Breast epithelium (tissue), 4 donors: ENCODE measurements at regions of chr7 and their contacts with region 1.

Region 1: DNA sequence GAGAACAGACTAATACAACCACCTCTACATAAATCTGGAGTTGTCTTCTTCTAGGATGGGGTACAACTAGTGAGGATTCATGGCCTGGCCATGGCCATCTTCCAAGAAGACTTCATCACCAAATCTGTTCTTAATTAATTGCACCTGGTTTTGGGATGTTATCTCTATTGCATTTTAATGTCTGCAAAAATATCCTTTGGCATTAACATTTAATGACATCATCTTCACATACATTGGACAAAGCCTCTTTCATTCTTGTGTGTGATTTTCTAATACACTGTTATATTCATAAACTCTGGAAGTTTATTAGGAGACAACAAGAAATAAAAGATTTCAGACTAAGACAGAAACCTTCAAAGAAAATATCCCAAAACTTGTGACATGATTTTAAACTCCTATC is 124.2 kb upstream of the ABCB5 start:
- DNase-seq: no peak
- H3K4me3 ChIP-seq: no peak overlapping the region
- H3K27ac ChIP-seq: no peak overlapping the region
- H3K4me1 ChIP-seq: no peaks in the 10 kb centered on the region
- H3K27me3 ChIP-seq: no peaks in the 10 kb centered on the region
- CTCF ChIP-seq: no peak
- POLR2A ChIP-seq: no peak

Region 2: DNA sequence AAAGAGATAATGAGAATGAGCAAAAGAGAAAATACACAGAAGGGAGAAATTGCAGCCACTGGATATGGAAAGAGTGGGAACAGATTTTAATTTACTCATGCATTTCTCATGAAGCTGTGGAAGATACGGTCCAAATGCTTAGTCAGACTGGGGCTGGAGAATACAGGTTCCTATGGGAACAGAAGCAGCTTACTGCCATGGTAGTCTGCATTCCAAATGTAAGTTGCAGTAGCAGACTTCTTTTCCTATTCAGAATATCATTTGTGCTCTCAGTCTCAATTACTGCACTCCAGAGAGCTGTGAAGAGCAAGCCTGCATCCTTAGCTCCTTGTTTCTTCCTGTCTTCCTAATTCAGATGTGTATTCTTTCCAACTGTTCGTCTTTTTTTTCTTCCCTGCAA is 527.0 kb before region 1 on chr7:
- intact Hi-C with region 1: no loop called
- DNase-seq: no peak
- H3K4me3 ChIP-seq: no peak overlapping the region
- H3K27ac ChIP-seq: no peak overlapping the region
- H3K4me1 ChIP-seq: no peaks in the 10 kb centered on the region
- H3K27me3 ChIP-seq: no peaks in the 10 kb centered on the region
- CTCF ChIP-seq: no peak
- POLR2A ChIP-seq: no peak

Region 3: GRCh38 chr7:20514364-20514763 is 23.1 kb after region 1 on chr7:
- intact Hi-C with region 1: no loop called
- DNase-seq: no peak
- H3K4me3 ChIP-seq: no peak overlapping the region
- H3K27ac ChIP-seq: no peak overlapping the region
- H3K4me1 ChIP-seq: no peaks in the 10 kb centered on the region
- H3K27me3 ChIP-seq: no peaks in the 10 kb centered on the region
- CTCF ChIP-seq: no peak
- POLR2A ChIP-seq: no peak

Region 4: DNA sequence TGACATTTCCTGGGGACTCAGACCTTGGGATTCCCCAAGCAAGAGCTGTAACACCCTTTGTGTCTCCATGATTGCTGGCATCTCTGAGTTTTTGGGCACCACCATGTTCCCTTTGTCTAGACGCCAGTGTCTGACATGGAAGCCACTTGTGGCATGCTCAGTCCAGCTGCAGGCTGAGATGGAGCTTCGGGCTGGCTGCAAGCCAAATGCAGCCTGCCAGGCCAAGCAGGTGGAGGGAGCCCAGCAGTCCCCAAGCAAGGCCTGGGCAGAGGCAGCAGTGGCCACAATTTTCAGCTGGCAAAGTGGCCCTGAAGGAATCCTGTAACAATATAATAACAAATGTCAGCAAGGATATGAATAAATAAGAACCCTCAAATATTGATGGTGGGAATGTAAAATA is 38.0 kb after region 1 on chr7:
- intact Hi-C with region 1: no loop called
- DNase-seq: no peak
- H3K4me3 ChIP-seq: no peak overlapping the region
- H3K27ac ChIP-seq: no peak overlapping the region
- H3K4me1 ChIP-seq: no peaks in the 10 kb centered on the region
- H3K27me3 ChIP-seq: no peaks in the 10 kb centered on the region
- CTCF ChIP-seq: no peak
- POLR2A ChIP-seq: no peak

Region 5: DNA sequence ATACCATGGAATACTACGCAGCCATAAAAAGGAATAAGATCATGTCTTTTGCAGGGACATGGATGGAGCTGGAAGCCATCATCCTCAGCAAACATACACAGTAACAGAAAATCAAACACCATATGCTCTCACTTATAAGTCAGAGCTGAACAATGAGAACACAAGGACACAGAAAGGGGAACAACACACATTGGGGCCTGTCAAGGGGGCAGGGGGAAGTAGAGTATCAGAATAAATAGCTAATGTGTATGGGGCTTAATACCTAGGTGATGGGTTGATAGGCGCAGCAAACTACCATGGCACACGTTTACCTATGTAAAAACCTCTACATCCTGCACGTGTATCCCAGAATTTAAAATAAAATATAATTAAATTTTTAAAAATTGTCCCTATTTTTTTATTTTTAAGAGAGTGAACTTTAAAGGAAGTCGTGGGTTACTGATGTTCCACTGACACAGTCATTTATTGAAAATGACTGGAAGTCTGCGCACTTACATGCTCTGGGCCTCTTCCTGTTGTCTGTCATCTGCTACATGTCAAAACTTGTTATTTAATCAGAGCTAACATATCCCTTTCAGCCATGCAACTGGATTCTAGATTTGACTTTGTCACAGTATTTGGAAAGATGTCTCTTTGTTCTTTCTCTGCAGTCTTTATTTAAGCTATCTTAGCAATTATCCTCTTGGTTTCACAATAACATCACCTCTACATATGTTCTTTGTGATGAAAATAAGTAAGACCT is 50.5 kb after region 1 on chr7:
- intact Hi-C with region 1: loop called (anchors 2 kb)
- DNase-seq: no peak
- H3K4me3 ChIP-seq: no peak overlapping the region
- H3K27ac ChIP-seq: no peak overlapping the region
- H3K4me1 ChIP-seq: no peaks in the 10 kb centered on the region
- H3K27me3 ChIP-seq: no peaks in the 10 kb centered on the region
- CTCF ChIP-seq: no peak
- POLR2A ChIP-seq: no peak